Activated naive CD4-positive, alpha-beta T cell treated with anti-CD3 and anti-CD28 coated beads for 36 hours (primary cell): ENCODE measurements at regions of chr3 and their contacts with region 1.

Region 1: GRCh38 chr3:141644931-141645330 is 93.2 kb upstream of the RNF7 start:
- DNase-seq: peak; percentile 86
- H3K4me3 Mint-ChIP-seq: no peak overlapping the region
- H3K27ac Mint-ChIP-seq: no peak overlapping the region
- H3K4me1 Mint-ChIP-seq: peaks cover 3% of the 10 kb centered on the region
- H3K27me3 Mint-ChIP-seq: no peaks in the 10 kb centered on the region

Region 2: GRCh38 chr3:141477224-141477623 is 167.7 kb before region 1 on chr3:
- CTCF ChIA-PET with region 1: interaction called, 3 read pairs
- intact Hi-C with region 1: loop called (anchors 1 kb)
- DNase-seq: no peak
- H3K4me3 Mint-ChIP-seq: no peak overlapping the region
- H3K27ac Mint-ChIP-seq: no peak overlapping the region
- H3K4me1 Mint-ChIP-seq: peaks cover 17% of the 10 kb centered on the region
- H3K27me3 Mint-ChIP-seq: no peaks in the 10 kb centered on the region

Region 3: GRCh38 chr3:141575879-141576743 is 68.8 kb before region 1 on chr3:
- CTCF ChIA-PET with region 1: interaction called, 3 read pairs
- intact Hi-C with region 1: loop called (anchors 1 kb)
- DNase-seq: no peak
- H3K4me3 Mint-ChIP-seq: no peak overlapping the region
- H3K27ac Mint-ChIP-seq: peak overlapping the region; percentile 63
- H3K4me1 Mint-ChIP-seq: peaks cover 14% of the 10 kb centered on the region
- H3K27me3 Mint-ChIP-seq: no peaks in the 10 kb centered on the region

Region 4: GRCh38 chr3:141632779-141633374 is 12.1 kb before region 1 on chr3:
- CTCF ChIA-PET with region 1: interaction called, 10 read pairs
- intact Hi-C with region 1: no loop called
- DNase-seq: no peak
- H3K4me3 Mint-ChIP-seq: no peak overlapping the region
- H3K27ac Mint-ChIP-seq: no peak overlapping the region
- H3K4me1 Mint-ChIP-seq: no peaks in the 10 kb centered on the region
- H3K27me3 Mint-ChIP-seq: no peaks in the 10 kb centered on the region

Region 5: DNA sequence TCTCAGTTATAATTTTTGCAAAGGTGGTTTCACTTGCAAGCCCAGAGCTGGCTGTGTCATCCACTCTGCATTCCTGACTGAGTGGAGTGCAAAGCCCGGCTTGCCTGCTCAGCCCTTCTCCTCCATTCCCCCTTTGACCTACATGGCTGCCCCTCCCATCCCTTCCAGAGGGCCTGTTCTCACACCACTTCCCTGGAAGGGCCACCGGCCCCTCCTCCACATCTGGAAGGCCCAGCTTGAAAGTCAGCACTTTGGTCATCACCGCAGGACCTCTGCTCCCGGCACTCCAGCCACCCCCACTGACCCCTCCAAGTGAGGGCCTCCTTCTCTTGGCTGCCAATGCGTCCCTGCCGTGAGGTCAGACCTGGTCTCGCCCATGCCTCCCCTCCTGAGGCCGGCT is 19.1 kb after region 1 on chr3:
- CTCF ChIA-PET with region 1: no interaction called
- intact Hi-C with region 1: no loop called
- DNase-seq: no peak
- H3K4me3 Mint-ChIP-seq: no peak overlapping the region
- H3K27ac Mint-ChIP-seq: no peak overlapping the region
- H3K4me1 Mint-ChIP-seq: peaks cover 6% of the 10 kb centered on the region
- H3K27me3 Mint-ChIP-seq: peaks cover 32% of the 10 kb centered on the region

Region 6: GRCh38 chr3:142618917-142619461 is 974.1 kb after region 1 on chr3:
- CTCF ChIA-PET with region 1: no interaction called
- intact Hi-C with region 1: no loop called
- DNase-seq: no peak
- H3K4me3 Mint-ChIP-seq: no peak overlapping the region
- H3K27ac Mint-ChIP-seq: no peak overlapping the region
- H3K4me1 Mint-ChIP-seq: no peaks in the 10 kb centered on the region
- H3K27me3 Mint-ChIP-seq: no peaks in the 10 kb centered on the region